ENCODE measurements at regions of chr10 and their contacts with region 1.

Region 1: DNA sequence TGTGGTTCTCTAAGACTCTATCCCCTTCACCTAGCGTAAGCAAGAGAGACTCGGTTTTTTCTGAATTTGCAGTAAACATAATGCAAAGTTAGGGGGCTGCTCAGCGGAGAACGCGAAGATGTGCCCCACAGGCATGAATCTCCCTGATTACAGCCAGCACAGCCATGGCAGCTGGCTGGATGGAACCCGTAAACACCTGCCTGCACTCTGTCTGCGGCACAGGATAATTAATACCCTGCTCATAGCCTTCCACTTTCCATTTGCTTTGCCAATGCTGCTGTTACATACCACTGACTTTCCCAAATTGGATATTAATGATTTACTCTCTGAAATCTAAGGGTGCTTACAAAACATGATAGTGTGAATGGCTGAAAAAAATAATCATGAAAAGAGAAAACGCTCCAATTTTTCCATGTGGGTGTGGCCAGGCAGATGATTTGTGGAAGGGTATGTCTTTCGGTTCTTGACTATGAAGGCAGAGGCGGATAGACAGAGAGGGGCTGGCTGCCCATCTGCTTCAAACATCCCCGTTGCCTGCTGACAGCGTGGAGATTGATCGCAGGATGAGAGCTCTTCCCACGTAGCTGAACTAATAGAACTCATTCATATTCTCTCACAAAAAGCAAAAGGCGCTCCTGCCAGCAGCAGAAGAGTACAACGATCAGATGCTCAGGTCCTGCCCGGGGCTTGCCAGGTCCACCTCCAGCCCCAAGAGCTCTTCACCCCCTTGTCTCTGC is 193.2 kb upstream of the GHITM start:
- DNase-seq: no peak
- H3K4me3 ChIP-seq: no peak overlapping the region
- H3K27ac ChIP-seq: no peak overlapping the region
- H3K4me1 ChIP-seq: no peaks in the 10 kb centered on the region
- H3K27me3 ChIP-seq: peaks cover 0 to 3% (median 2%) of the 10 kb centered on the region in 5 experiments

Region 2: DNA sequence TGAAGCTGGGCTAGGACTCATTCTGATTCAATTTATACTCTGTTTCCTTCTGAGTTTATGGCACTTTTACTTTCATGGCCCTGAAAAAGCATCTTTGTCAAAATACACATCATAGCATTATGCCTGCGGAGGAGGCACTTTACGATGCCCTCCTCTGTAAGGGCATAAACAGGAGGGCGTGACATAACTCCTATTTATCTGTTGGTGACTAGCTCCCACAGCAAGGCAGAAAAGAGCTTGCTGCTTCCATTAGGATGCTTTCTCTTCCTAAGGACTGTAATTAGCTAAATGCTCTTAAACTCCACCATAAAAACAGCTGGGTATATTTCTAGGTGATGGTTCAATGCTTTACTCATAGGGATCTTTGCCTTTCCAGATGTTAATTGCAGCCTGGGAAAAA is 122.1 kb before region 1 on chr10:
- CTCF ChIA-PET with region 1: no interaction called
- POLR2A ChIA-PET with region 1: interaction called, 11 read pairs
- DNase-seq: no peak
- H3K4me3 ChIP-seq: no peak overlapping the region
- H3K27ac ChIP-seq: no peak overlapping the region
- H3K4me1 ChIP-seq: no peaks in the 10 kb centered on the region
- H3K27me3 ChIP-seq: no peaks in the 10 kb centered on the region

Region 3: DNA sequence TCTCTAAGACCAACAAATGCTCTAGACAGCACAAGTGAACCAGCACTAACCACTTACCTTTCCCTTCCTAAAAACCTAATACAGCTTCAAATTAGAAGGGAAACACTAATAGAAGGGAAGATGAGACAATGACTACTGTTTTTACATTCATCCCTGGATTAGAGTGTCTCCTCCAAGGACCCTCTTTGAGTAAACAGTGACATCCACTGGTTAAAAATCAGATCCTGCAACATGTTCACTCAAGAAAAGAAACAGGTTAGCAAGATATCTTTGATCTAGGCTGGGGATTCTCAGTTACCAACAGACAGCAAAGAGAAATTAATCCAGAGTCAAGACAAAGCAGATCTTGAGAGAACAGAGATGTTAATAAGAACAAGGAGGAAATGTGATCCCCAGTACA is 15.5 kb after region 1 on chr10:
- CTCF ChIA-PET with region 1: no interaction called
- POLR2A ChIA-PET with region 1: no interaction called
- DNase-seq: no peak
- H3K4me3 ChIP-seq: no peak overlapping the region
- H3K27ac ChIP-seq: no peak overlapping the region
- H3K4me1 ChIP-seq: no peaks in the 10 kb centered on the region
- H3K27me3 ChIP-seq: no peaks in the 10 kb centered on the region

Region 4: DNA sequence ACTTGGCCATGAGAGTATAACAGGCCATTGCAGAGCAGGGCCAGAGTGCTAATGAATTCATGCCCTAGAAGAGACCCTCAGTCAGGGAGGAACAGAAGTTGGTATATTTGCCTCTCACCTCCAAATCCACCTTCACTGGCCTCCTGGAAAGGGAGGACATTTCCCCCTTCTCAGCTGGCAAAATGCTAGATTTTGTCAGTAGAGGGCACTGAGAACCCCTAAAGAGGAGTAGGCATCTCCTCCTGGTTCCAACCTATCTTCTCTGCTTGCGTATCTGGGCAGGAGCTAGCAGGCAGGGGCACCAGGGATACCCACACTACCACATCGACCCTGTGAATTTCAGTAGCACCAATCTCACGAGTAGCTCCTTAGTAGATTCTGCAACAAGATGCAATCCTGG is 113.4 kb after region 1 on chr10:
- CTCF ChIA-PET with region 1: no interaction called
- POLR2A ChIA-PET with region 1: no interaction called
- DNase-seq: no peak
- H3K4me3 ChIP-seq: no peak overlapping the region
- H3K27ac ChIP-seq: no peak overlapping the region
- H3K4me1 ChIP-seq: no peaks in the 10 kb centered on the region
- H3K27me3 ChIP-seq: peaks cover 0 to 4% (median 0%) of the 10 kb centered on the region in 5 experiments